Head of caudate nucleus (tissue), 42 donors: ENCODE measurements at regions of chr17 and their contacts with region 1.

Region 1: GRCh38 chr17:43170766-43171585 is at the start of gene NBR1:
- DNase-seq: peak; percentile 89 to 99 (median 97)

Region 2: DNA sequence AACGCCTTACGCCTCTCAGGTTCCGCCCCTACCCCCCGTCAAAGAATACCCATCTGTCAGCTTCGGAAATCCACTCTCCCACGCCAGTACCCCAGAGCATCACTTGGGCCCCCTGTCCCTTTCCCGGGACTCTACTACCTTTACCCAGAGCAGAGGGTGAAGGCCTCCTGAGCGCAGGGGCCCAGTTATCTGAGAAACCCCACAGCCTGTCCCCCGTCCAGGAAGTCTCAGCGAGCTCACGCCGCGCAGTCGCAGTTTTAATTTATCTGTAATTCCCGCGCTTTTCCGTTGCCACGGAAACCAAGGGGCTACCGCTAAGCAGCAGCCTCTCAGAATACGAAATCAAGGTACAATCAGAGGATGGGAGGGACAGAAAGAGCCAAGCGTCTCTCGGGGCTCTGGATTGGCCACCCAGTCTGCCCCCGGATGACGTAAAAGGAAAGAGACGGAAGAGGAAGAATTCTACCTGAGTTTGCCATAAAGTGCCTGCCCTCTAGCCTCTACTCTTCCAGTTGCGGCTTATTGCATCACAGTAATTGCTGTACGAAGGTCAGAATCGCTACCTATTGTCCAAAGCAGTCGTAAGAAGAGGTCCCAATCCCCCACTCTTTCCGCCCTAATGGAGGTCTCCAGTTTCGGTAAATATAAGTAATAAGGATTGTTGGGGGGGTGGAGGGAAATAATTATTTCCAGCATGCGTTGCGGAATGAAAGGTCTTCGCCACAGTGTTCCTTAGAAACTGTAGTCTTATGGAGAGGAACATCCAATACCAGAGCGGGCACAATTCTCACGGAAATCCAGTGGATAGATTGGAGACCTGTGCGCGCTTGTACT is 45.6 kb before region 1 on chr17 and contains the start of gene BRCA1:
- intact Hi-C with region 1: loop called (anchors 5 kb)
- DNase-seq: peak; percentile 79 to 97 (median 91)